Natural killer cell (primary cell): ENCODE measurements at regions of chr2 and their contacts with region 1.

Region 1: DNA sequence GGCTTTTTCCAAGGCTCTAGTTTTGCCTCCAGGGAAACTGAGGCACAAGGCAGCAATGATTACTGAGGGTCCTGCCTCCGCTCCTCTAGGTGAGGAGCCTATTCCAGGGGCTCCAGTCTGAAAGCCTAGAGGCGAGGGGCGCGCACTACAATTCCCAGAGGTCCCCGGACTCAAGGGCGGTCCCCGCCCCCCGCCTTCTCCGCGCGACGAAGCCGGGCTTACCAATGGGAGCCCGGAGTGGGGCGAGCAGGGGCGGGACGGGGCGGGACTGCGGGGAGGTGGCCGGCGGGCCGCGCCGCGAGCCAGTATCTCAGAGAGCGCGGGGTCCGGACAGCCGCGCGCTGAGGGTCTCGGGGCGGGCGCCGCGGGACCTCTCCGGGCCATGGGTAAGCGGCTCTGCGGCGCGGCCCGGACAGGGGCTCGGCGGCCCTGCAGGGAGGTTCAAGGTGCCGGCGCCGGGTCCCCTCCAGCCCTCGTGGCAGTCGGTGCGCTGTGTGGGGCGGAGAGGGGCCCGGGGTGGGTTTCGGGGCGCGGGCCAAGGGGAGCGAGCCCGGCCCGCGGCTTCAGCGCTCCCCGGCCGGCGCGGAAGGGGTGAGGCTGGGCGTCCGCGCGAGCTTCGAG is at the start of gene ARID5A:
- DNase-seq: peak; percentile 81 to 94
- ATAC-seq: peak; percentile 66 to 82 (median 67)
- H3K4me3 ChIP-seq: peak within 1 kb of the TSS; percentile 94
- H3K4me3 Mint-ChIP-seq: peak within 1 kb of the TSS; percentile 98
- H3K27ac ChIP-seq: peak within 1 kb of the TSS; percentile 95
- H3K27ac Mint-ChIP-seq: peak within 1 kb of the TSS; percentile 97 to 98
- H3K4me1 ChIP-seq: peaks cover 65% of the 10 kb centered on the region
- H3K4me1 Mint-ChIP-seq: peaks cover 53% of the 10 kb centered on the region in 2 donors
- H3K27me3 ChIP-seq: no peaks in the 10 kb centered on the region
- H3K27me3 Mint-ChIP-seq: no peaks in the 10 kb centered on the region
- CTCF ChIP-seq: peak; percentile 41
- total RNA-seq, gene ARID5A: 90.9 to 117 (median 114) TPM

Region 2: GRCh38 chr2:96145036-96145847 is 391.3 kb before region 1 on chr2 and contains the start of gene DUSP2:
- intact Hi-C with region 1: loop called (anchors 5 kb)
- DNase-seq: peak; percentile 81 to 94
- ATAC-seq: peak; percentile 51 to 75 (median 65)
- H3K4me3 ChIP-seq: peak within 1 kb of the TSS; percentile 71
- H3K4me3 Mint-ChIP-seq: peak within 1 kb of the TSS; percentile 94
- H3K27ac ChIP-seq: peak within 1 kb of the TSS; percentile 99
- H3K27ac Mint-ChIP-seq: peak within 1 kb of the TSS; percentile 92 to 94
- H3K4me1 ChIP-seq: peaks cover 74% of the 10 kb centered on the region
- H3K4me1 Mint-ChIP-seq: peaks cover 30 to 64% of the 10 kb centered on the region in 2 donors
- H3K27me3 ChIP-seq: no peaks in the 10 kb centered on the region
- H3K27me3 Mint-ChIP-seq: no peaks in the 10 kb centered on the region
- CTCF ChIP-seq: no peak
- total RNA-seq, gene DUSP2: 300 to 564 (median 432) TPM

Region 3: DNA sequence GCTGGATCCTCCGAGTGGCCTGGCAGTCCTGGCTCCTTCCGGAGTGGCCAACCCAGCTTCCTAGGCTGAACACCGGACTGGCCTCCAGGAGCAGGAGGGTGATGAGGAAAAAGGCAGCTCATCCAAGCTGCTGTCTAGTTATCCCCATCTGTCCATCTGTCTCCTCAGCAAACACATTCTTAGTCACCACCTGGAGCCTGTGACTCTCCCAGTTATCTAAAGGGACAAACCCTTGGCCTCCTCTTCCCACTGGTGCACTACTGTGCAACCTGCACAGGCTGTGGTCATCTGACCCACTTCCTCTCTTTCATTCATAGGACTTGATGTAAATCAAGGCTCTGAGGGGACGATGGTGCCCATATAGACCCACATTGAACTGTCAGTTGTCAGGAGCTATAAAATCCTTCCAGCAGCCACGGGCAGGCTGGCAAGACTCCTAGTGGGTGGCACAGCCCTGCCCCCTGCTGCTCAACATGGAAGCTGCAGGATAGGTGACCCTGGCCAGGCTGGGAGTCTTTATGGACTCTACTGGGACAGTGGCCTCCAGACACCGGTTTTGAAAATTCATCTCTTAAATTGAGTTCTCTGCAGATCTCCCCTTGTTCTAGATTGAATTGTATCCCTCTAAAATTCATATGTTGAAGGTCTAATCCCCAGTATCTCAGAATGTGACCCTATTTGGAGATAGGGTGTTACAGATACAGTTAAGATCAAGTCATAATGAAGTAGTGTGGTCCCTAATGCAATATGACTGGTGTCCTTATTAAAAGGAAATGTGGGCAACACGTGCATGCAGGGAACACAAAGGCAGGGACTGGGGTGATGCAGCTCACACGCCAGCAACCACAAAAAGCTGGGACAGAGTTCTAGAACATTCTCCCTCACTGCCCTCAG is 362.1 kb before region 1 on chr2:
- intact Hi-C with region 1: no loop called
- DNase-seq: peak; percentile 80 to 90
- ATAC-seq: peak; percentile 94 to 100 (median 100)
- H3K4me3 ChIP-seq: no peak overlapping the region
- H3K4me3 Mint-ChIP-seq: no peak overlapping the region
- H3K27ac ChIP-seq: no peak overlapping the region
- H3K27ac Mint-ChIP-seq: peak overlapping the region in 1 of 2 donors; percentile 19
- H3K4me1 ChIP-seq: peaks cover 7% of the 10 kb centered on the region
- H3K4me1 Mint-ChIP-seq: peaks cover 8% of the 10 kb centered on the region in 2 donors
- H3K27me3 ChIP-seq: no peaks in the 10 kb centered on the region
- H3K27me3 Mint-ChIP-seq: peaks cover 0 to 2% of the 10 kb centered on the region in 2 donors
- CTCF ChIP-seq: peak; percentile 91

Region 4: GRCh38 chr2:96305091-96305978 is 231.2 kb before region 1 on chr2 and contains the start of gene SNRNP200:
- intact Hi-C with region 1: loop called (anchors 1 kb)
- DNase-seq: peak; percentile 83 to 96
- ATAC-seq: peak; percentile 90 to 95 (median 90)
- H3K4me3 ChIP-seq: peak within 1 kb of the TSS; percentile 91
- H3K4me3 Mint-ChIP-seq: peak within 1 kb of the TSS; percentile 98
- H3K27ac ChIP-seq: peak within 1 kb of the TSS; percentile 94
- H3K27ac Mint-ChIP-seq: peak within 1 kb of the TSS; percentile 97 to 99
- H3K4me1 ChIP-seq: peaks cover 24% of the 10 kb centered on the region
- H3K4me1 Mint-ChIP-seq: peaks cover 55 to 56% of the 10 kb centered on the region in 2 donors
- H3K27me3 ChIP-seq: no peaks in the 10 kb centered on the region
- H3K27me3 Mint-ChIP-seq: no peaks in the 10 kb centered on the region
- CTCF ChIP-seq: no peak
- total RNA-seq, gene SNRNP200: 207 to 236 (median 228) TPM

Region 5: GRCh38 chr2:96485751-96486651 is 50.6 kb before region 1 on chr2:
- intact Hi-C with region 1: loop called (anchors 5 kb)
- DNase-seq: peak; percentile 56 to 88
- ATAC-seq: peak; percentile 91 to 94 (median 93)
- H3K4me3 ChIP-seq: peak overlapping the region; percentile 36
- H3K4me3 Mint-ChIP-seq: peak overlapping the region; percentile 93
- H3K27ac ChIP-seq: peak overlapping the region; percentile 76
- H3K27ac Mint-ChIP-seq: peak overlapping the region; percentile 90 to 92
- H3K4me1 ChIP-seq: peaks cover 13% of the 10 kb centered on the region
- H3K4me1 Mint-ChIP-seq: peaks cover 18 to 23% of the 10 kb centered on the region in 2 donors
- H3K27me3 ChIP-seq: no peaks in the 10 kb centered on the region
- H3K27me3 Mint-ChIP-seq: peaks cover 0 to 9% of the 10 kb centered on the region in 2 donors
- CTCF ChIP-seq: no peak

Region 6: DNA sequence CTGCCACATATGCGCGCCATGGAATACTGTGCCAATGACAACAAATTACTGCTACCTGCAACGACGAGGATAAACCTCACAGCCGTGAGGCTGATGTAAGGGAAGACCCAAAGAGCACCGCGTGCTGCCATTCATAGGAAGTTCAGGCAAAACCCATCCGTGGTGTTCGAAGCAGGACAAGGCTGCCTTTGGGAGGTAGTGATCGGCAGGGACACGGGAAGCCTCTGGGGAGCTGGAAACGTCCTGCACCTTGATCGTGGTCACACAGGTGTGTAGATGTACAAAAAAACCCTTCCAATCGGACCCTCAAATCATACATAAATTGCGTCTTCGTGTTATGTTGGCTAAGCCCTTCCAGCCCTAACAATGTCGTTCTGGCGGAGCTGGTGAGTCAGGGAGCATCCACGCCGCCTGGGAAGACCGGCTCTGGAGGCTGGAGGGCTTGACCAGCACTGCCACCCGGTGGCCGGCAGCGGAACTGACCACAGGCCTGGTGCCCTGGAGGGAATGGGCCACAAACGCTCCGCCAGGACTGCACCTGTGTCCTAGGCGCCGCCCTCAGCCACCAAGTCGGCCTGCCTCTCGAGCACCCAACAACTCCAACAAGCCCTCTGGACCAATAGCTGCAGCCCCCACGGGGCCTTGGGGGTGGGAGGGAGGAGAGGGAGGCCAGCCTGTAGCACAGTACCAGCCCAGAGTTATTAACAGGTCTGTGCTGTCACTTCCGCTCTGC is 27.3 kb before region 1 on chr2:
- intact Hi-C with region 1: no loop called
- DNase-seq: peak; percentile 66 to 68
- ATAC-seq: peak; percentile 58 to 63 (median 61)
- H3K4me3 ChIP-seq: no peak overlapping the region
- H3K4me3 Mint-ChIP-seq: peak overlapping the region; percentile 47
- H3K27ac ChIP-seq: no peak overlapping the region
- H3K27ac Mint-ChIP-seq: peak overlapping the region in 1 of 2 donors; percentile 22
- H3K4me1 ChIP-seq: peaks cover 23% of the 10 kb centered on the region
- H3K4me1 Mint-ChIP-seq: peaks cover 24% of the 10 kb centered on the region in 2 donors
- H3K27me3 ChIP-seq: peaks cover 2% of the 10 kb centered on the region
- H3K27me3 Mint-ChIP-seq: peaks cover 13 to 21% of the 10 kb centered on the region in 2 donors
- CTCF ChIP-seq: peak; percentile 83

Region 7: GRCh38 chr2:96554293-96555145 is 18.0 kb after region 1 on chr2:
- intact Hi-C with region 1: loop called (anchors 2 kb)
- DNase-seq: peak; percentile 66 to 88
- ATAC-seq: peak; percentile 79 to 92 (median 80)
- H3K4me3 ChIP-seq: no peak overlapping the region
- H3K4me3 Mint-ChIP-seq: no peak overlapping the region
- H3K27ac ChIP-seq: no peak overlapping the region
- H3K27ac Mint-ChIP-seq: peak overlapping the region in 1 of 2 donors; percentile 38
- H3K4me1 ChIP-seq: peaks cover 17% of the 10 kb centered on the region
- H3K4me1 Mint-ChIP-seq: peaks cover 5 to 32% of the 10 kb centered on the region in 2 donors
- H3K27me3 ChIP-seq: no peaks in the 10 kb centered on the region
- H3K27me3 Mint-ChIP-seq: no peaks in the 10 kb centered on the region
- CTCF ChIP-seq: peak; percentile 100

Region 8: GRCh38 chr2:96618604-96619283 is 82.2 kb after region 1 on chr2:
- intact Hi-C with region 1: loop called (anchors 5 kb)
- DNase-seq: no peak
- ATAC-seq: peak in 1 of 3 donors; percentile 52
- H3K4me3 ChIP-seq: no peak overlapping the region
- H3K4me3 Mint-ChIP-seq: no peak overlapping the region
- H3K27ac ChIP-seq: no peak overlapping the region
- H3K27ac Mint-ChIP-seq: peak overlapping the region in 1 of 2 donors; percentile 58
- H3K4me1 ChIP-seq: peaks cover 18% of the 10 kb centered on the region
- H3K4me1 Mint-ChIP-seq: peaks cover 44 to 46% of the 10 kb centered on the region in 2 donors
- H3K27me3 ChIP-seq: no peaks in the 10 kb centered on the region
- H3K27me3 Mint-ChIP-seq: no peaks in the 10 kb centered on the region
- CTCF ChIP-seq: no peak

Region 9: DNA sequence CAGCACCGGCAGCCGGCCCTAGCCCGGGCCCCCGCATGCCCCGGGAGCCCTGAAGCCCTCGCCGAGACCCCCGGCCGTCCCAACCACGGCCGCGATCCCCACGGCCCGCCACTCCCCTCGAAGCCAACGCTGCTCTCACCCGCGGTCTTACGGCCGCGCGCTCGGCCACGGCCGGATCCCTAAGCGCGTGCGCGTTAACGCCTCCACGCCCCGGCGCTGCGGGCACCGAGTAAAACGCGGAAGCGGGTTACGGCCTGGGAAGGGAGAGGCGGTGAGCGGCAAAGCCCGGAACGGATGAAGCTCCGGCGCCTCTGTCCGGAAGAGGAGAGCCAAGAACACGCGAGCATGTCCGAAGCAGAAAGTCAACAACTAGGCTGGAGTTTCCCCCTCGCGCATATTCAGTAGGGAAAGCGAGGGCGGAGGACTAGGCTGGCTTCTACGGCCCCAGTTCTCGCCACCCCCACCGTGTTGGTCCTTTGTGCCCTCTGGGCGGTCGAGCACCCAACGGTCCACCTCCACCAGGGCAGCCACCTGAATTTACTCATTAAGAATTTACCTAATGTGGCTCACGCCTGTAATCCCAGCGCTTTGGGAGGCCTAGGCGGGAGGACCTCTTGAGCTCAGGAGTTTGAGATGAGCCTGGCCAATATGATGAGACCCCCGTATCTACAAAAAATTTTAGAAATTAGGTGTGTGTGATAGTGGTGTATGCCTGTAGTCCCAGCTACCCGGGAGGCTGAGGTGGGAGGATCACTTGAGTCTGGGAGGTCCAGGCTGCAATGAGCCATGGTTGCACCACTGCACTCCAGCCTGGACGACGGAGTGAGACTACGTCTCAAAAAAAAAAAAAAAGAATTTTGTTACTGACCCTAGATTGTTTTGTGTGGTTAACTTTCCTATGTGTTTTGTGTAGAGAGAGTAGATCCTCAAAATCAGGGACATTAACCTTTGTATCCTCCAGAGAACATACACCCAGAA is 101.9 kb after region 1 on chr2 and contains the start of gene KANSL3:
- intact Hi-C with region 1: loop called (anchors 5 kb)
- DNase-seq: peak; percentile 94 to 95
- ATAC-seq: peak; percentile 82 to 93 (median 87)
- H3K4me3 ChIP-seq: peak within 1 kb of the TSS; percentile 60
- H3K4me3 Mint-ChIP-seq: peak within 1 kb of the TSS; percentile 93
- H3K27ac ChIP-seq: peak within 1 kb of the TSS; percentile 89
- H3K27ac Mint-ChIP-seq: peak within 1 kb of the TSS; percentile 94 to 97
- H3K4me1 ChIP-seq: peaks cover 19% of the 10 kb centered on the region
- H3K4me1 Mint-ChIP-seq: peaks cover 33% of the 10 kb centered on the region in 2 donors
- H3K27me3 ChIP-seq: no peaks in the 10 kb centered on the region
- H3K27me3 Mint-ChIP-seq: peaks cover 0 to 3% of the 10 kb centered on the region in 2 donors
- CTCF ChIP-seq: no peak
- total RNA-seq, gene KANSL3: 73.9 to 98.0 (median 83.5) TPM